Cardiac septum (tissue), 1 donor: ENCODE measurements at regions of chr3 and their contacts with region 1.

Region 1: GRCh38 chr3:138594150-138594934 is at the start of gene CEP70:
- DNase-seq: peak; percentile 95
- total RNA-seq, gene CEP70: 22.0 TPM

Region 2: DNA sequence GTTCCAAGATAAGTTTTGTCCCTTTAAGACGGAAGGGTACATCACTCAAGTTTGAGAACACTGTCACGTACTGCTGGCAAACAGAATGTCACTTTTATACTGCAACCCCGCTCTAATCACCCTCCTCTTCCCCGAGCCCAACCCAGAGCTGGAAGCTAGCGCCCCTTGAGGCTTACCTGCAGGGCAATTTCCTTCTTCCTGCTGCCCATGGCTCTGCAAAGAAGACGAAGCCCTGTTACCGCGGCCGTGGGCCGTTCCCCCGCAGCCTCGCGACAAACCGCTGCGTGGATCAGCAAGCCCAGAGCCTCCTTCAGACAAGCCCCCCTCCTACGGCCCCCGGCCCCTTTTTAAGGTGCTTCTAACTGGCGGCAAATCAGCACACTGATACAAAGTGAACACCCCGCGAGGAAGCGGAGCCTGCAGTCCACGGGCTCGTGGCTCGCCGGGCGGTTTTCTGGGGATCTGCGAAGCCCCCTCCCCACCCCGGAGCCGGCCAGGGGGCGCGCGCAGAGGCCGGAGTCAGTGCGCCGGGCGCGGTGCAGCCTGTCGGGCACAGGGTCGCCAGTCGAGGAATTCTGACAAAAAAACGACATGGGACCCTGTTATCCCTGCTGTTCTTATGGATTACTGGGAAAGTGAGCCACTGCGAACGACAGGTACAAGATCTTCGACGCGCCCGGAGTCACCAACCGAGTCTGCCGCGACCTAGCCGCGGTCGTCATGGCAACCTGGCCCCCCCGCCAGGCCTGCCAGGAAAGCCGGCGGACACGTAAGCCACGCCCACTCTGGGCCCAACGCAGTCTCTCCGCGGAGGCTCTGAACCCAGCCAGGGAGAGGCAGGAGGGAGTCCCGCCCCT is 265.0 kb before region 1 on chr3 and contains the start of gene NME9:
- intact Hi-C with region 1: loop called (anchors 5 kb)
- DNase-seq: peak; percentile 93
- total RNA-seq, gene NME9: not detected

Region 3: DNA sequence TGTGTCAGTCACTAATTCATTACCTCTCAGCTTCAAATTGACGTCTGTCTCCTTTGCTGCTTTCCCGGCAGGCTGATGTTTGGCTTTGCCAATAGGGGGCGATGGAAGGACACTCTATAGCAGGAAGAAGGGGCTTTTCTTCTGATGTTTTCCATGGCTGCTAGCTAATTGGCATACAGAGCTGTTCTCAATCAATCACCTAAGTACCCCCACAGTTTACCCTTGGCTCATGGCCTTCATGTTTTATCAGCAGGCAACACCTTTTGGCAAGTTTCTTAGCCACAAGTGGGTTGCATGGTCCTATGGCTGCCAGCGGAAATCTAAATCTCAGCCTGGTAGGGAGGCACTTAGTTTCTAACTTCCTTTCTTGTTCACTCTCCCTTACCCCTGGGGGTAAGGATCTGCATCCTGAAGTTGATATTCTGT is 114.9 kb before region 1 on chr3:
- intact Hi-C with region 1: loop called (anchors 5 kb)
- DNase-seq: no peak

Region 4: GRCh38 chr3:138608322-138609135 is 14.2 kb after region 1 on chr3 and contains the start of gene FAIM:
- intact Hi-C with region 1: loop called (anchors 2 kb)
- DNase-seq: peak; percentile 83
- total RNA-seq, gene FAIM: 3.5 TPM

Region 5: DNA sequence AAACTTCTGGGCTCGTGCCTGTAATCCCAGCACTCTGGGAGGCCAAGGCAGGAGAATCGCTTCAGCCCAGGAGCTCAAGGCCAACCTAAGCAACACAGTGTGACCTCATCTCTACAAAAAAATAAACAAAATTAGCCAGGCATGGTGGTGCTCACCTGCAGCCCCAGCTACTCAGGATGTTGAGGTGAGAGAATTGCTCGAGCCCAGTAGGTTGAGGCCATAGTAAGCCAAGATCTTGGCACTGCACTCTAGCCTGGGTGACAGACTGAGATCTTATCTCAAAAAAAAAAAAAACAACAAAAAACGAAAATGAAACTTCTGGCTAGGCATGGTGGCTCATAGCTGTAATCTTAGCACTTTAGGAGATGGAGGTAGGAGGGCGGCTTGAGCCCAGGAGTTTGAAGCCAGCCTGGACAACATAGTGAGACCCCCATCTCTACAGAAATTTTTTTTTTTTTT is 186.7 kb after region 1 on chr3:
- intact Hi-C with region 1: no loop called
- DNase-seq: no peak

Region 6: GRCh38 chr3:138915503-138916498 is 321.5 kb after region 1 on chr3:
- intact Hi-C with region 1: loop called (anchors 1 kb)
- DNase-seq: peak; percentile 96